T-cell (primary cell): ENCODE measurements at regions of chr3 and their contacts with region 1.

Region 1: DNA sequence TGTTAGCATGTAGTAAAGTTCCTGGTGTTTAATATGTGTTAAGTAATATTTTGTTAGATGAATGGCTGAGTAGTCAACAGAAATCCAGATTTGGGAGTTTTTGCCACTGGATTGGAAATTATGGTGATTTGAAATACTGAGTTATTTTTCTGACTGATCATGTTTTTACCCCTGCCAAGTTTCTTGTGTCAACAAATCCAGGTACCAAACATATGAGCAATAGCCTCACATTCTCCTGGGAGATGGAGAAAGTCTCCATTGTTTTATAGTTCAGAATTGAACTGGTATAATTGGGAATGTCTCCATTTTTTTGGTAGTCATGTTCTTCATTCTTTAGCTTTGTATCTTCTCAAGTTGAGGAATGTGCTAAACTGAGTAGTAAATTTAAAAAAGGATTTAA is 767.2 kb upstream of the LMCD1 start:
- DNase-seq: no peak
- ATAC-seq: no peak
- H3K4me3 ChIP-seq: no peak overlapping the region
- H3K4me3 Mint-ChIP-seq: no peak overlapping the region
- H3K27ac ChIP-seq: no peak overlapping the region
- H3K27ac Mint-ChIP-seq: no peak overlapping the region
- H3K4me1 ChIP-seq: no peaks in the 10 kb centered on the region
- H3K4me1 Mint-ChIP-seq: no peaks in the 10 kb centered on the region
- H3K27me3 ChIP-seq: no peaks in the 10 kb centered on the region
- H3K27me3 Mint-ChIP-seq: no peaks in the 10 kb centered on the region

Region 2: DNA sequence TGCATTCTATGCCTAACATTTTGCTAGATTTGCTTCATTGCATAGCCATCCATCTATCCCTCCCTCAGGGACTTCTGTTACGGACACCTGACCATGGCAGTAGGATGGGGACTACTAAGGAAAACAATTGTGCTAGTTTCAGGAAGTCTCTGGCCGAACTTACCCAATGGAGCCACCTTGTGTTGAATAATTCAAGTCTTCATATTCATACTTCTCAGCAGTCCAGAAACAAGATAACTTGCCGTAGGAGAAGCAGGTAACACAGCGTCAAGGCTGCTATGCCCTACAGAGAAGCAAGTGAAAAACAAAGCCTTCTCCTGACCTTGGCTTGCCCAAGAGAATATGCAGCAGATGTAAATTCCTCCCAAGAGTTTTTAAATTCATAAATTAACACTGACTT is 188.2 kb before region 1 on chr3:
- CTCF ChIA-PET with region 1: no interaction called
- POLR2A ChIA-PET with region 1: no interaction called
- DNase-seq: no peak
- ATAC-seq: no peak
- H3K4me3 ChIP-seq: no peak overlapping the region
- H3K4me3 Mint-ChIP-seq: no peak overlapping the region
- H3K27ac ChIP-seq: no peak overlapping the region
- H3K27ac Mint-ChIP-seq: no peak overlapping the region
- H3K4me1 ChIP-seq: no peaks in the 10 kb centered on the region
- H3K4me1 Mint-ChIP-seq: no peaks in the 10 kb centered on the region
- H3K27me3 ChIP-seq: no peaks in the 10 kb centered on the region
- H3K27me3 Mint-ChIP-seq: no peaks in the 10 kb centered on the region

Region 3: DNA sequence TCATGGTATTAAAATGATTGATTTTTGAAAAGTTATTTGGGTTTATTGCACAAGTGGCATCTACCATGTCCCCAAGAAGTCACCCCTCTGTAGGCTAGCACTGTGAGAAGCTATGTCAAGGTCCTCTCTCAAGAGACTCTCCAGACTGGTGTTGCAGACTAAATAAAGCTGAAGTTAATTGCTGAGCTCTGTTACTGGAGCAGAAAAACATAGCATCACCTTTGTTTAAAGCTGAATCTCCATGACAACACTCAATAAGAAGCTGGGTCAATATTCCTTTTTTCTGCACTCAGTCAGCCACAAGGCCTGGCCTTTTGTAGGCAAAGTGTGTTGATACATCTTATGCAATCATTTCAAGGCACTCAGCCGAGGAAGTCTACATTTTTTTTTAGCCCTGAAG is 39.4 kb before region 1 on chr3:
- CTCF ChIA-PET with region 1: no interaction called
- POLR2A ChIA-PET with region 1: no interaction called
- DNase-seq: no peak
- ATAC-seq: no peak
- H3K4me3 ChIP-seq: no peak overlapping the region
- H3K4me3 Mint-ChIP-seq: no peak overlapping the region
- H3K27ac ChIP-seq: no peak overlapping the region
- H3K27ac Mint-ChIP-seq: no peak overlapping the region
- H3K4me1 ChIP-seq: no peaks in the 10 kb centered on the region
- H3K4me1 Mint-ChIP-seq: no peaks in the 10 kb centered on the region
- H3K27me3 ChIP-seq: no peaks in the 10 kb centered on the region
- H3K27me3 Mint-ChIP-seq: no peaks in the 10 kb centered on the region

Region 4: GRCh38 chr3:7764115-7764514 is 29.7 kb after region 1 on chr3:
- CTCF ChIA-PET with region 1: interaction called in 1 of 2 experiments, 8 read pairs
- POLR2A ChIA-PET with region 1: interaction called in 1 of 2 experiments, 14 read pairs
- DNase-seq: no peak
- ATAC-seq: no peak
- H3K4me3 ChIP-seq: no peak overlapping the region
- H3K4me3 Mint-ChIP-seq: no peak overlapping the region
- H3K27ac ChIP-seq: no peak overlapping the region
- H3K27ac Mint-ChIP-seq: no peak overlapping the region
- H3K4me1 ChIP-seq: no peaks in the 10 kb centered on the region
- H3K4me1 Mint-ChIP-seq: no peaks in the 10 kb centered on the region
- H3K27me3 ChIP-seq: no peaks in the 10 kb centered on the region
- H3K27me3 Mint-ChIP-seq: no peaks in the 10 kb centered on the region